Ovary (tissue), 10 donors: ENCODE measurements at regions of chr1 and their contacts with region 1.

Region 1: GRCh38 chr1:215473910-215474309 is 93.2 kb upstream of the KCTD3 start:
- DNase-seq: no peak
- H3K4me3 ChIP-seq: no peak overlapping the region
- H3K27ac ChIP-seq: no peak overlapping the region
- H3K4me1 ChIP-seq: no peaks in the 10 kb centered on the region
- H3K27me3 ChIP-seq: no peaks in the 10 kb centered on the region
- CTCF ChIP-seq: no peak
- EP300 ChIP-seq: no peak
- POLR2A ChIP-seq: no peak

Region 2: GRCh38 chr1:215273838-215274516 is 199.9 kb before region 1 on chr1:
- intact Hi-C with region 1: no loop called
- DNase-seq: no peak
- H3K4me3 ChIP-seq: no peak overlapping the region
- H3K27ac ChIP-seq: no peak overlapping the region
- H3K4me1 ChIP-seq: no peaks in the 10 kb centered on the region
- H3K27me3 ChIP-seq: no peaks in the 10 kb centered on the region
- CTCF ChIP-seq: no peak
- EP300 ChIP-seq: no peak
- POLR2A ChIP-seq: no peak

Region 3: GRCh38 chr1:215458104-215458503 is 15.8 kb before region 1 on chr1:
- intact Hi-C with region 1: loop called in 1 of 4 experiments (anchors 1 kb)
- DNase-seq: no peak
- H3K4me3 ChIP-seq: no peak overlapping the region
- H3K27ac ChIP-seq: no peak overlapping the region
- H3K4me1 ChIP-seq: no peaks in the 10 kb centered on the region
- H3K27me3 ChIP-seq: no peaks in the 10 kb centered on the region
- CTCF ChIP-seq: no peak
- EP300 ChIP-seq: no peak
- POLR2A ChIP-seq: no peak

Region 4: GRCh38 chr1:215637041-215637573 is 163.2 kb after region 1 on chr1:
- intact Hi-C with region 1: no loop called
- DNase-seq: peak in 4 of 5 donors; percentile 25 to 45 (median 34)
- H3K4me3 ChIP-seq: no peak overlapping the region
- H3K27ac ChIP-seq: peak overlapping the region in 1 of 2 donors; percentile 24
- H3K4me1 ChIP-seq: peaks cover 4% of the 10 kb centered on the region
- H3K27me3 ChIP-seq: no peaks in the 10 kb centered on the region
- CTCF ChIP-seq: no peak
- EP300 ChIP-seq: no peak
- POLR2A ChIP-seq: no peak